ENCODE measurements at regions of chr19 and their contacts with region 1.

Region 1: DNA sequence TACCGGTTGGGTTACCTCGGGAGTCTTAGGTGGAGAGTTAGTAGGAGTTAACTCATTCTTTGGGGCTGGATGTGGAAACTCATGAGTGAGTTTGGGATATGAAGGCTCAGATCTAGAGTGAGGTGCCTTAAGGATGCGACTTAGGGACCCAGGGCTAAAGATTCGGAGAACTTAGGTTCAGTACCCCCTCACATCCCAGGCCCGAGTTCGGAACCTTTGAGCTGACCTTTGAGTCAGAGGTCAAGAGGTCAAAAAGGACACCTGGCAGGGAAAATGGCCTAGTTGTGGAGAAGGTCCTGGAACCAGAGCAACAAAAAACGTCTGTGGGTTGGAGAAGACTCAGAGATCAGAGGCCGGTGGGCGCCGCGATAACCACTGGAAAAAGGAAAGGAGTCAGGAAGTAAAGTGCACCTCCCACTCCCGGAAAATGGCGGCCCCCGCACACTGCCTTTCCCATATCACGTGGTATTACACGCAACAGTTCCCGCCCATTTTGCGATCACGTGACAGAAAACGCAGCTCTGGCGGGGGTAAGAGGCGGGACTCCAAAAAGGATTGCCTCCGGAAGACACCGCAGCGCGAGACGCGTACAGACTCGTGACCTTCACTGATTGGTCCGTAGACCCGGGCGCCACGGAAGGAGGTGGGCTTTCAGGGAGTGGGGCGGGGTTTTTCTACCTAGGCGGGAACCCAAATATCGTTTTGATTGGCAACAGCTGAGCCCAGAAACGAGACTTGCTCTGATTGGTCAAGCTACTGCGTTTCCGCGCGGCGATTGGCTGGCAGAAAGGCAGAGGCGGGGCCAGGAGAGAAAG is at the start of gene ACTMAP:
- DNase-seq: peak; percentile 100
- H3K4me3 Mint-ChIP-seq: peak within 1 kb of the TSS; percentile 92
- H3K27ac Mint-ChIP-seq: peak within 1 kb of the TSS; percentile 100
- H3K4me1 Mint-ChIP-seq: peaks cover 37% of the 10 kb centered on the region
- H3K27me3 Mint-ChIP-seq: no peaks in the 10 kb centered on the region
- total RNA-seq, gene ACTMAP: 8.6 and 9.4 TPM in 2 replicates

Region 2: GRCh38 chr19:40614622-40615411 is 135.4 kb before region 1 on chr19:
- intact Hi-C with region 1: loop called (anchors 1 kb)
- DNase-seq: peak; percentile 95
- H3K4me3 Mint-ChIP-seq: peak overlapping the region; percentile 92
- H3K27ac Mint-ChIP-seq: peak overlapping the region; percentile 98
- H3K4me1 Mint-ChIP-seq: peaks cover 40% of the 10 kb centered on the region
- H3K27me3 Mint-ChIP-seq: no peaks in the 10 kb centered on the region

Region 3: DNA sequence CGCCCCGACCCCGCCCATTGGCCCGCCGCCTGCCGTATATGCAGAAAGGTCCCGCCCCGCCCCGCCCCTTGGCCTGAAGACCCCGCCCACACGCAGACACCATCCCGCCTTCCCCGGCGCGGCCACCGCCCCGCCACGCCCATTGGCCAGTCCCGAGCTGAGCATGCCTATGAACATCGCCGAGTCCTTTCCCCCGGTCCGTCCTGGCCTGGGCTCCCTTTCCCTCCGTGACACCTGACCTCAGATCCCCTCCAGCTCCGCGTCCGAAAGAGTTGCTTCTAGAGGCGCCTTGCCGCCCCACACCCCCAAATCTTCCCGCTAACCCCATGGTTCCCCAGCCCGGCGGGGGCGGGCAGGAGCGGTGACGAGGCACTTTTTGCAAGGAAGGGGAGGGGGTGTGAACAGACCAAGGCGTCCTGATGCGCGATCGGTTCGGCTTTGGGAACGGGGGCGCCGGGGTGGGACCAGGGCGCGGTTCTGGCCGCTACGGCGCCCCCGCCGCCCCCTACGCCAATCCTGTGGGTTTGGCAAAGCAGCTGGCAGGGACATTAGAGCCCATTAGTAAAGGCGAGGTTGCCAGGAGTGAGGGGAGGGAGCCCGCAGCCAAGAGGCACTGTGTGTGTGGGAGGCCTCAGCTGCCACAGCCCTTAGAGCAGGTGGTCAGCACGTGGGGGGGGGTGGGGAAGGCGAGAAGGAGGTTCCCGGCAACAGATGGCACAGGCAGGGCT is 59.4 kb before region 1 on chr19:
- intact Hi-C with region 1: loop called (anchors 1 kb)
- DNase-seq: peak; percentile 95
- H3K4me3 Mint-ChIP-seq: peak overlapping the region; percentile 91
- H3K27ac Mint-ChIP-seq: peak overlapping the region; percentile 94
- H3K4me1 Mint-ChIP-seq: peaks cover 4% of the 10 kb centered on the region
- H3K27me3 Mint-ChIP-seq: no peaks in the 10 kb centered on the region

Region 4: GRCh38 chr19:40777937-40778705 is 27.9 kb after region 1 on chr19 and contains the start of gene RAB4B:
- intact Hi-C with region 1: loop called (anchors 1 kb)
- DNase-seq: peak; percentile 100
- H3K4me3 Mint-ChIP-seq: peak within 1 kb of the TSS; percentile 94
- H3K27ac Mint-ChIP-seq: peak within 1 kb of the TSS; percentile 96
- H3K4me1 Mint-ChIP-seq: peaks cover 53% of the 10 kb centered on the region
- H3K27me3 Mint-ChIP-seq: no peaks in the 10 kb centered on the region
- total RNA-seq, gene RAB4B: 36.3 and 41.0 TPM in 2 replicates

Region 5: DNA sequence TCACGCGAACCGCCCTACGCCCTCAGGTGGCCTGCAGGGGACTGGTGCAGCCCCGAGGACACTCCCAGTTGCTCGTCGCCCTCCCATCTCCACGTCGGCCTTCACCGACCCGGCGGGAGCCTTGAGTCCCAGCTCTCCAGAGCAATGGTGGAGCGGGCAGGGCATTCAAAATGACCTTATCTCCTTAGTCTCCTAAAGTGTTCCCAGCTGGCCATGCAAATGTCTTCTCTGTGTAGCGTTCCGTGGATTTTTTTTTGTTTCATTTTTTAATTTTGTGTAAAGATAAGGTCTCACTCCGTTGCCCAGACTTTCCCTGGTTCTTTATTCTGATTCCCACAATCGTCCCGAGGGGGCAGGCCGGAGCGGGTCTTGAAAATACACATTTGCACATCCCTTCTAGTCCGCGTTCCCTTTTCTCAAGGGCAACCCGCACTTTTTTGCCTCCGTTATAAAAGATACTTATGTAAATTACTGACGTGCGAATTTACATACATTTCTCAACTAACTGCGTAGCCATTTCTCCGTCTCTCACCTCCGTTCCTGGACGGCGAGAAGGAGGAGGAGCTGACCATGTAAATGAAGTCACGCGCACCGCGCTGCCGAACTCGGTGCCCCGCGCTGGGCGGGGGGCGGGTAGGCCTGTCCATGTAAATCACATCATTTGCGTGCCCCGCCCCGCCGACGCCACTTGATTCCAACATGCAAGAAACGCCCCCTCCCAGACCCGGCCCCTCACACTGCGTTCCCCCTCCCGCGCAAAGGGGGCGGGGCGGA is 48.1 kb after region 1 on chr19:
- intact Hi-C with region 1: loop called (anchors 2 kb)
- DNase-seq: peak; percentile 100
- H3K4me3 Mint-ChIP-seq: peak overlapping the region; percentile 89
- H3K27ac Mint-ChIP-seq: peak overlapping the region; percentile 95
- H3K4me1 Mint-ChIP-seq: peaks cover 51% of the 10 kb centered on the region
- H3K27me3 Mint-ChIP-seq: no peaks in the 10 kb centered on the region

Region 6: DNA sequence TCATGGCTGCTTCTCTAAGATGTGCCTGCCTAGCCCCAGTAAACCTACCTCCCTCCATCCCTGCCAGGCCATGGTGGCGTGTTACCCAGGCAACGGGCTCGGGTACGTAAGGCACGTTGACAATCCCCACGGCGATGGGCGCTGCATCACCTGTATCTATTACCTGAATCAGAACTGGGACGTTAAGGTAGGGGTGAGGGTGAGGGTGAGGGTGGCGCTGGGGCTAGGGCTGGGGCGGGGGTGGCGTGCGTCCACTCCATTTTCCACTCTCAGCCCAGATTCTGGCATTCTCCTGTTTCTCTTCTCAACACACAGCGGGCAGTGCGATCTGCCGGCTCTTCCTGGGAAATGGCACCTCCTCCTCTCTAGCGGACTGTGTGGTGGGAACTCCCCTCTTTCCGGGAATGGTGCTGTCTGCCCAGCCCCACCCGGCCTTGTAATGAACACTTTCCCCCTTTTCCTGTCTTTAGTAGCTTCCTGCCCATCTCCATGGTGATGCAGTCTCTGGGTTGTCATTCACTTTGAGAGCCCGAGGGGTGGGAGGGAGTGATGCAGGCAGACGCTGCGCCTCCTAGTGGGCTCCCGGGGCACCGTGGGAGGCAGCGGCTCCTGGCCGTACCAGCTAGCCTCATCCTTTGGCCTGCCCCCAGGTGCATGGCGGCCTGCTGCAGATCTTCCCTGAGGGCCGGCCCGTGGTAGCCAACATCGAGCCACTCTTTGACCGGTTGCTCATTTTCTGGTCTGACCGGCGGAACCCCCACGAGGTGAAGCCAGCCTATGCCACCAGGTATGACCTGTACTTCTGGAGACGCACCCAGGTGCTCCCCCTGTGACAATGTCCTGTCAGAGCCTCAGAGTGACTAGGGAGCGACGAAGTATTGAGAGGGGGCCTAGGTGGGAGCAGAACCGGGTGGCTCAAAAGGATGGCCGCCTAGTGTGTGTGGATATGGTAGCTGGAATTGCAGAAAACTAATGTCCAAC is 56.5 kb after region 1 on chr19:
- intact Hi-C with region 1: loop called (anchors 2 kb)
- DNase-seq: peak; percentile 94
- H3K4me3 Mint-ChIP-seq: peak overlapping the region; percentile 77
- H3K27ac Mint-ChIP-seq: peak overlapping the region; percentile 89
- H3K4me1 Mint-ChIP-seq: peaks cover 75% of the 10 kb centered on the region
- H3K27me3 Mint-ChIP-seq: peaks cover 4% of the 10 kb centered on the region

Measured in activated CD4-positive, alpha-beta T cell treated with anti-CD3 and anti-CD28 coated beads, Interleukin-2, amount 10 ng/mL, durations not matched to agents 24 days and 14 days (primary cell).